Panc1 (cell line): ENCODE measurements at regions of chr9 and their contacts with region 1.

Region 1: DNA sequence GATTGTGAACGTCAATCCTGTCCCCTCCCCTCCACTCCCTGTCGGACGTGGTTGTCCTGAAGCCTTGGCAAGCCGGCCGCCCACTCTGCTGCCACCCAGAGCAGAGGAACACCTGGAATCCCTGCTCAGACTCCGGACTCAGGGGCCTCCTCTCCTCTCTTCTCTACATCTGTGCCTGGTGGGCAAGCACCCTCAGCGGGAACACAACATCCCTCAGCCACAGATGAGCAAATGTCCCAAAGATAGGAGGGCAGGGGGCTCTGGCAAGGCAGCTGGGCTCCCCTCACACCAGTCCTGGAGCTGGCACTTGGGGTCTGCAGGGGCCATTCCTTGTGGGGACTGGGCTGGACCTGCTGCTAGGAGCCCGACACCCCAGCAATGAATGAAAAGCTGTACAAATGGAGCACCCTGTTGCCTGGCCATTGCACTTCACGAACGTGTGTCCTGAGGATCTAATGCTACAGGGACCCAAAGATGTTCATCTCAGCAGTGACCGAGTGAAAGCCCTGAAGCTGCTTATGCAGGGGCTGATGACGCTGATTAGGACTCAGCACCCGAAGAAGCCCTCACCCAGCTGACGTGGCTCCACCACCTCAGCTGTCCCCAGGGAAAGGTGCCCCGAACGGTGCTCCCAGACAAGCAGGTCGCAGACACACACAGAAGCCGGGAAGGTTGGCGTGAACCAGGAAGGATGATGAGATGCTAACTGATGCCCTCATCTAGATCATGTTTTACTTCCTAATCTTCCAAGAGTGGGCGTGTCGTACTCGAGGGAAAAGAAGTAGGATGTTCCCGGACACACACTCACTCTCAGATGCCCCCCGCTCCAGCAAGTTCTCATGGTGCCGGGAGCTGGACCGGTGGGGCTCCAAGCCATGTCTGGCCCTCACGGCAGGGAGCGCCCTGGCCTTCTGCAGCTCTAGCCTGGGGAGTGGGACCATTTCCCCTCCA is 177.0 kb upstream of the PPP1R26 start:
- DNase-seq: no peak
- ATAC-seq: no peak
- H3K4me3 ChIP-seq: no peak overlapping the region
- H3K27ac ChIP-seq: no peak overlapping the region
- H3K4me1 ChIP-seq: no peaks in the 10 kb centered on the region
- H3K27me3 ChIP-seq: no peaks in the 10 kb centered on the region; the same call in 1 of the 2 replicates
- CTCF ChIP-seq: no peak

Region 2: GRCh38 chr9:135357863-135358551 is 55.4 kb after region 1 on chr9:
- CTCF ChIA-PET with region 1: interaction called, 12 read pairs
- POLR2A ChIA-PET with region 1: no interaction called
- in situ Hi-C with region 1: no loop called
- intact Hi-C with region 1: no loop called
- DNase-seq: no peak
- ATAC-seq: no peak
- H3K4me3 ChIP-seq: no peak overlapping the region
- H3K27ac ChIP-seq: no peak overlapping the region
- H3K4me1 ChIP-seq: no peaks in the 10 kb centered on the region
- H3K27me3 ChIP-seq: no peaks in the 10 kb centered on the region
- CTCF ChIP-seq: no peak